Ascending aorta (tissue), 2 donors: ENCODE measurements at regions of chr18 and their contacts with region 1.

Region 1: DNA sequence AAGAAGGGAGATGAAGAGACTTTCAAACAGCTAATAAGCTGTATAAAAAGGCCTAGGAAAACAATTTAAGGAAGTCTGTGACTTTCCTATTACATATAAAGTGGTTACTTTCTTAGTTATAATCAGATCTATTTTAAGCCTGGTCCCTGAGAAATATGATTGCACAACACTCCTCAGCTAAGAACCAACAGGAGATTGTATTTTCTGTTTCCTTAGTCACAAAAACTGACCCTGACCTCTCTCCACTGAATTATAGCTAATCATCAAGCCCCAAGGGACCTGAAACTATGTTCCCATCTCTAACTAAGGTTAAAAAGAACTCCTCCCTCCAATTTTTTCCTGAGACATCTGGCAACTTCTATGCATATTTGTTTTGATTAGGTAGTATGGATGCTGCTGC is 106.9 kb downstream of the ROCK1 start:
- DNase-seq: no peak
- H3K4me3 ChIP-seq: peak overlapping the region in 1 of 2 donors; percentile 8
- H3K27ac ChIP-seq: peak overlapping the region; percentile 63 to 79
- H3K4me1 ChIP-seq: peaks cover 0 to 18% of the 10 kb centered on the region in 2 donors
- H3K27me3 ChIP-seq: no peaks in the 10 kb centered on the region
- CTCF ChIP-seq: no peak

Region 2: GRCh38 chr18:21053127-21053526 is 48.4 kb after region 1 on chr18:
- intact Hi-C with region 1: loop called (anchors 5 kb)
- DNase-seq: no peak
- H3K4me3 ChIP-seq: no peak overlapping the region
- H3K27ac ChIP-seq: peak overlapping the region; percentile 69 to 74
- H3K4me1 ChIP-seq: peaks cover 13 to 45% of the 10 kb centered on the region in 2 donors
- H3K27me3 ChIP-seq: no peaks in the 10 kb centered on the region
- CTCF ChIP-seq: no peak

Region 3: DNA sequence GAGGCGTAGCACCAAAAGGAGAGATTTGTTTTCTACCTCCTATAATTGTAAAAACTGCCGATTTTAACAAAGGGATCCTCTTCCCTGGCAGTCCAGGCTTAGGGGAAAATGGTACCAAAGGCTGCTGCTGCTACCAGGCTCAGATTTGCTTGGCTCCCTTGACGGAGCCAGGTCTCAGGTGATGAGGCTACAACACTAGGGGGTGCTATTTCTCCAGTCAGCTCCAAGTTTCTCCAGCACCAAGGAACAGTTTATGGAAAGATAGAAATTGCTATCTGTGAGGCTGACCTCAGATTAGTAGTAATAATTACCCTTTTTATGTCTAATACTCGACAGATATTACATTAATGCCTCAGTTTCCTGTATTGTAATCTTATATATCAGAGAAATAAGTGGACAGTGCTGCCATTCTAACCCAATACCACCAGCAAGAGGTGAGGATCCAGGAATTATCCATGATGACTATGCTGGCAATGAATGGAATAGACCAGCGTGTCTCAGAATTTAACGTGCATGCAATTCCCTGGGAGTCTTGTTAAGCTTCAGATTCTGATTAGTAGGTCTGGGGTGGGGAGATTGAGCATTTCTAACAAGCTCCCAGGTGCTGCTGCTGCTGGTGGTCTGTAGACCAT is 484.5 kb after region 1 on chr18:
- intact Hi-C with region 1: no loop called
- DNase-seq: no peak
- H3K4me3 ChIP-seq: no peak overlapping the region
- H3K27ac ChIP-seq: no peak overlapping the region
- H3K4me1 ChIP-seq: no peaks in the 10 kb centered on the region
- H3K27me3 ChIP-seq: no peaks in the 10 kb centered on the region
- CTCF ChIP-seq: peak; percentile 40 to 71 (median 66)